ENCODE measurements at regions of chr2 and their contacts with region 1.

Region 1: GRCh38 chr2:39227628-39228412 is 15.9 kb downstream of the CDKL4 start:
- DNase-seq: no peak
- H3K4me3 ChIP-seq: no peak overlapping the region; the same call in 1 of the 2 replicates
- CTCF ChIP-seq: peak; percentile 87

Region 2: DNA sequence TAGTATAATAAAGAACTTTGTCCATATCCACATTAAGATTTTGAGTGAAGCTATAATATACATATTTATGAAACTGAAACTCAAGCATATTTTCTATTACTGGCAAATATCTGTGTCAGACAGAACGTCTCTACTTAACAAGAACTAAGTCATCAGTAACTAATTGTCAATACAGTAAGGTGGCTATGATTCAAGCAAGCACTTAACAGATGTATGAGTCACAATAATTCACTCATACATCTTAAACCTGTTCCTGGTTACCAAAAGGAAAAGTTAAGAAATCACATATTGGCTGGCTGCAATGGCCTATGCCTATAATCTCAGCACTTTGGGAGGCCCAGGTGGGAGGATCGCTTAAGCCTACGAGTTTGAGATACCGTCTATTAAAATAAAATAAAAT is 203.0 kb before region 1 on chr2:
- CTCF ChIA-PET with region 1: interaction called, 14 read pairs
- POLR2A ChIA-PET with region 1: no interaction called
- DNase-seq: no peak
- H3K4me3 ChIP-seq: no peak overlapping the region
- CTCF ChIP-seq: no peak

Region 3: DNA sequence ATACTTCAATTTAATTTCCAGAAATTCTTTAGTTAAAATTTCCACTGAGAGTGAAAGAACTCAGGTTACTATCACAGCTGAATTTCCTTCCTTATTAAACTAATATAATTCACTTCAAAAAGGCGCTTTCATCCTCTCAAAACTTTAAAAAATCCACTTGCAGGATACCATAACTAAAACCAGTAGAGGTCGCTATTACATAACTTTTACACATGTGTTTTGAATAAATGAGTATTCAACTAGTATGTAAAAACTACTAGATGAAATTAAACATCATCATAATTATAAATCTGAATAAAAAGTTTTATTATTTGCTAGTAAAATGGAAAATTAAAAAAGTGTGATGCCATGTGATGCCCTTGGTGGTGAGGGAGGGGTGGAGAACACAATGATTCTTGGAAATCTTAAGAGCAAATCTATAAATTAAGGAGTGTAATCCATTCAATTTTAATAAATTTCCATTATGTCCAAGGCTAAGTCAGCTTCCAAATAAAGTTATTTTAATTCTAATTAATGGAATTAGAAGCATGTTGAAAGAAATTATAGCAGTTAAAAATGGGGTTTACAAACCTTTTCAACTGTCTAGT is 168.4 kb before region 1 on chr2:
- CTCF ChIA-PET with region 1: interaction called, 484 read pairs
- POLR2A ChIA-PET with region 1: no interaction called
- DNase-seq: no peak
- H3K4me3 ChIP-seq: no peak overlapping the region
- CTCF ChIP-seq: peak; percentile 23

Region 4: DNA sequence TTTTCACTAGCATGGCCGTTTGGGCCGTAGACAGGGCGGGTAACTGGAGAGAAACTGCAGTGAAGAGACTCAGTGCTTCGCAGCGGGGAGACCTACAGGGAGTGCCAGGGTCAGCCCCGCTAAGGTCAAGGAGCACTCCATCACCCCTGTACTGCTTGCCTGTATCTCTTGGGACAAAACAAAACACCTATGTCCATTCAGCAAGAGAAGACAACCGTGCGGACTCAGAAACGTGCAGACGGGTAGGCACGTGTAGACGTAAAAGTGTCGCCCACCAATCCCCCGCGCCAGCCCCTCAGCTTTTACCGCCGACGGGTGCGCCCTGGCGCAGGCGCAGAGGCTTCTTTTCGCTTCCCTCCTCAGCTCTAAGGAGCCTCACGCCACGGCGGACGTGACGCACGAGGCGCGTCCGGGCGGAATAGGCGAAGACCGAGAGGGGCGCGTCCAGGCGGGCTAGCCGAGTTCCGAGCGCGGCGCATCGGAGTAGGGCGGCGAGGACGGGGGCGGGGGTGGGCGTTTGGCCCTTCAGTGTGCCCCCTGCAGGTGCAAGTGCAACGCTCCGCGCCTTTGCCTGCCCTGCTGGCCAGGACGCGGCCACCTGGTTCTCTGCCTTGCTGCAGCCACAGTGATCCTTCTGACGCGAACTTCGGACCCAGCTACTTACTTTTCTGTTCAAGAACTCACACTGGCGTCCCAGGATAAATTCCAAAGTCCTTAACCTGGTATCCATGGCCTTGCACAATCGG is 103.6 kb before region 1 on chr2:
- CTCF ChIA-PET with region 1: interaction called, 13 read pairs
- POLR2A ChIA-PET with region 1: no interaction called
- DNase-seq: peak; percentile 68
- H3K4me3 ChIP-seq: peak overlapping the region; percentile 80
- CTCF ChIP-seq: peak; percentile 68

Region 5: GRCh38 chr2:39202639-39203369 is 25.0 kb before region 1 on chr2:
- CTCF ChIA-PET with region 1: interaction called, 18 read pairs
- POLR2A ChIA-PET with region 1: no interaction called
- DNase-seq: no peak
- H3K4me3 ChIP-seq: no peak overlapping the region
- CTCF ChIP-seq: no peak

Region 6: DNA sequence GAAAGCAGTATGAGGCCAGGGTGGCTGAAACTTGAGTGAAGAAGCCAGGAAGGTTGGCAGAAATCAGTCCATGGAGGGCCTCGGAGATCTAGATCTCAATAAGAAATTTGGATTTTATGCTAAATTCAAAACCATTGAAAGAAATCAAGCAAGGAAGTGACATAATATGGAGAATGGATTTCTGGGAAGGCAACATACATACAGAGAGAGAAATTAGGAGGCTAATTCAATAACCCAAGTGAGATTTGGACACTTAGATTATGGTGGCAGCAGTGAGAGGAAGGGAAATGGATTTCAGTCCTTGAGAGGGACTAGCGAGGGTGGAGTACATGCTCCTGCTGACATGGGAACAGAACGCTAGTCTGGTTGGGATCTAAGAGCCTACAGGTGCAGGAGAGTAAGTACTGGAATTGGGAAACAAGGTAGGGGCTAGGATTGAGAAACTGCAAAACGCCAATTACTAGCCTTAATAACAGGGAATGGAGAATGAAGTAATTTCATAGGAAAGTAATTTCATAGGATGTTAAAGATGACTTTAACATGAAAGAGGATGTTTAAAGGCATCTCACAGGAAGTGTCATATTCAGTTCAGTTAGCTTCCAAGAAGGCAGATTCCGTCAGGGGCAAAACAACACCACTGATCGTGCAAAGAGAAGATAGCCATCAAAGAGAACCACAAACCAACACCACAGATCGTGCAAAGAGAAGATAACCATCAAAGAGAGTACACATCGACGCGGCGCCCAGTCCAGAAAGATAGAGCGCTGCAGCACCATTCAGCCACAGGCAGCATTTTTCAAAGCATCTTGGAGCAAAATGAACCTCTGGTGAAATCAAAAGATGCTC is 11.3 kb before region 1 on chr2:
- CTCF ChIA-PET with region 1: interaction called, 24 read pairs
- POLR2A ChIA-PET with region 1: no interaction called
- DNase-seq: no peak
- H3K4me3 ChIP-seq: no peak overlapping the region
- CTCF ChIP-seq: no peak

Region 7: GRCh38 chr2:39338502-39338901 is 110.7 kb after region 1 on chr2:
- CTCF ChIA-PET with region 1: no interaction called
- POLR2A ChIA-PET with region 1: no interaction called
- DNase-seq: no peak
- H3K4me3 ChIP-seq: no peak overlapping the region
- CTCF ChIP-seq: no peak

Region 8: GRCh38 chr2:39447266-39448169 is 219.7 kb after region 1 on chr2:
- CTCF ChIA-PET with region 1: no interaction called
- POLR2A ChIA-PET with region 1: no interaction called
- DNase-seq: no peak
- H3K4me3 ChIP-seq: no peak overlapping the region
- CTCF ChIP-seq: no peak